ENCODE measurements at regions of chr22 and their contacts with region 1.

Region 1: DNA sequence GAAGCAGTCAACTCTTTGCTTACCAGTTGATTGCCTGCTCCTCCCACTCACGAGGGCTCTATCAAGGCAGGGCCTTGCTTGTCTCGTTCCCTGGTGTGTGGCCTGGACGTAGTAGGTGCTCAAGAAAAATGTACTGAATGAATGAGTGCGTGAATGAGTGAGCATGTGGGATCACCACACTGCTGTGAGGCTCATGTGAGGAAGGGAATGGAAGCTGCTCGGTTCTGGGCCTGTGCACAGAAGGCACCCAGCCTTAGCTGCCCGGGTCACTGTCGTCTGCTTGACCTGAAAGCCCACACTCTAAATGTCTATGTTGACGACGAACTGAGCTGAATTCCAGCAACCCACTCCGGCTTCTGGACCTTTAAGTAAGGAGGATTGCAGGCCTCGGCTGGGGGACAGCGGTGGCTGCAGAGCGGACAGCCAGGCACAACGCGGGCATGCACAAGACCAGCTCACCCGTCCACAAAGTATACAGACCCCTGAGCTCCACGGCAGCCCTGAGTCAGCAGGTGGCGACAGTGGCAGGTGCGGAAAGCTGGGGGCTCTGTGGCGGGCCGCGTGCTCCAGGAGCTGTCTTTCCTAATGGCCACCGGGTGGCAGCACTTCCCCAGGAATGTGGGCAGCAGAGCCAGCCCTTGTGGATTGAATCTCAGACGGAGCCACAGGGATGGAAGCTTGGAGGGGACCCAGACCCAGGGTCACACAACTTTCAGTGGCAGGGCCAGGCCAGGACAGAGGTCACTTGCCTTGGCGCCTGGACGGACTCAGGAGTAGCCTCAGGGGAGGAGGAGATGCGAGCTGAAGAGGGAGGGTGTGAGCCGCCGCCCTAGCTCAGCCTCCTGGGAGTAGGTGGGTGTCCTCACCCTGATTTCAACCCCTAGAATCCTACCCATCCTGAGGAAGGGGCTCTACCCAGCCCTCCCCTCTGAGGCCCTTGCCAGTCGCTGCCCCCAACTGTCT is 5.0 kb upstream of the PICK1 start:
- DNase-seq: peak; percentile 61 to 89 (median 81)
- ATAC-seq: peak; percentile 86
- H3K4me3 ChIP-seq: no peak overlapping the region
- H3K4me3 Mint-ChIP-seq: no peak overlapping the region
- H3K27ac ChIP-seq: no peak overlapping the region
- H3K27ac Mint-ChIP-seq: no peak overlapping the region
- H3K4me1 ChIP-seq: peaks cover 13% of the 10 kb centered on the region
- H3K4me1 Mint-ChIP-seq: peaks cover 9% of the 10 kb centered on the region
- H3K27me3 ChIP-seq: no peaks in the 10 kb centered on the region
- H3K27me3 Mint-ChIP-seq: peaks cover 6% of the 10 kb centered on the region
- CTCF ChIP-seq: peak; percentile 92

Region 2: GRCh38 chr22:37762389-37762836 is 289.8 kb before region 1 on chr22:
- CTCF ChIA-PET with region 1: no interaction called
- POLR2A ChIA-PET with region 1: no interaction called
- intact Hi-C with region 1: no loop called
- DNase-seq: no peak
- ATAC-seq: no peak
- H3K4me3 ChIP-seq: no peak overlapping the region
- H3K4me3 Mint-ChIP-seq: no peak overlapping the region
- H3K27ac ChIP-seq: no peak overlapping the region
- H3K27ac Mint-ChIP-seq: no peak overlapping the region
- H3K4me1 ChIP-seq: no peaks in the 10 kb centered on the region
- H3K4me1 Mint-ChIP-seq: no peaks in the 10 kb centered on the region
- H3K27me3 ChIP-seq: no peaks in the 10 kb centered on the region
- H3K27me3 Mint-ChIP-seq: no peaks in the 10 kb centered on the region
- CTCF ChIP-seq: no peak

Region 3: GRCh38 chr22:38066381-38067027 is 14.3 kb after region 1 on chr22:
- CTCF ChIA-PET with region 1: interaction called, 19 read pairs
- POLR2A ChIA-PET with region 1: no interaction called
- intact Hi-C with region 1: no loop called
- DNase-seq: no peak
- ATAC-seq: no peak
- H3K4me3 ChIP-seq: no peak overlapping the region
- H3K4me3 Mint-ChIP-seq: no peak overlapping the region
- H3K27ac ChIP-seq: no peak overlapping the region
- H3K27ac Mint-ChIP-seq: no peak overlapping the region
- H3K4me1 ChIP-seq: no peaks in the 10 kb centered on the region
- H3K4me1 Mint-ChIP-seq: peaks cover 2% of the 10 kb centered on the region
- H3K27me3 ChIP-seq: no peaks in the 10 kb centered on the region
- H3K27me3 Mint-ChIP-seq: no peaks in the 10 kb centered on the region
- CTCF ChIP-seq: no peak

Region 4: DNA sequence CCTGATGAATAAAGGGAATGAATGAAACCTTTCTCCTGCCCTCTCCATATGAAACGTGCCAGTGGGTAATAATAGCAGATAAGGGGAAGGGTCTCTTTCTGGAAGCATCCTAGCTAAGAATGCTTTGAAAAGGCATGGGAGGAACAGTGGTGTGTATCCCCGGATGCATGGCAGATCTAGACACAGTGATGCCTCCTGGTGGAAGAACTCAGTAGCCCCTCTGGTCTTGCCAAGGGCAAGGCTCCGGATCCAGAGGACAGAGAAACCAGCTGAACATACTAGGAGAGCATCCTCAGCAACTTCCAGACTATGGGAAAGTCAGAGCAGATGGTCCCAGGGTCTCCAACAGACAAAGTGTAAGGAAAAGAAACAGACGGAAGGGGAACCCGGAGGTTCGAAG is 51.9 kb after region 1 on chr22:
- CTCF ChIA-PET with region 1: interaction called, 13 read pairs
- POLR2A ChIA-PET with region 1: no interaction called
- intact Hi-C with region 1: loop called in 1 of 2 experiments (anchors 10 kb)
- DNase-seq: peak in 2 of 9 experiments; percentile 8 to 25
- ATAC-seq: no peak
- H3K4me3 ChIP-seq: no peak overlapping the region
- H3K4me3 Mint-ChIP-seq: no peak overlapping the region
- H3K27ac ChIP-seq: no peak overlapping the region
- H3K27ac Mint-ChIP-seq: no peak overlapping the region
- H3K4me1 ChIP-seq: no peaks in the 10 kb centered on the region
- H3K4me1 Mint-ChIP-seq: peaks cover 9% of the 10 kb centered on the region
- H3K27me3 ChIP-seq: no peaks in the 10 kb centered on the region
- H3K27me3 Mint-ChIP-seq: no peaks in the 10 kb centered on the region
- CTCF ChIP-seq: no peak

Region 5: GRCh38 chr22:38230108-38230825 is 178.1 kb after region 1 on chr22:
- CTCF ChIA-PET with region 1: interaction called, 20 read pairs
- POLR2A ChIA-PET with region 1: no interaction called
- intact Hi-C with region 1: loop called in 1 of 2 experiments (anchors 1 kb)
- DNase-seq: peak in 7 of 9 experiments; percentile 10 to 73 (median 47)
- ATAC-seq: peak; percentile 67
- H3K4me3 ChIP-seq: no peak overlapping the region
- H3K4me3 Mint-ChIP-seq: no peak overlapping the region
- H3K27ac ChIP-seq: peak overlapping the region in 1 of 2 experiments; percentile 31
- H3K27ac Mint-ChIP-seq: no peak overlapping the region
- H3K4me1 ChIP-seq: peaks cover 3% of the 10 kb centered on the region
- H3K4me1 Mint-ChIP-seq: no peaks in the 10 kb centered on the region
- H3K27me3 ChIP-seq: no peaks in the 10 kb centered on the region
- H3K27me3 Mint-ChIP-seq: no peaks in the 10 kb centered on the region
- CTCF ChIP-seq: peak; percentile 29

Region 6: GRCh38 chr22:38347897-38348750 is 295.9 kb after region 1 on chr22:
- CTCF ChIA-PET with region 1: interaction called, 44 read pairs
- POLR2A ChIA-PET with region 1: no interaction called
- intact Hi-C with region 1: loop called (anchors 1 kb)
- DNase-seq: peak in 1 of 9 experiments; percentile 25
- ATAC-seq: no peak
- H3K4me3 ChIP-seq: no peak overlapping the region
- H3K4me3 Mint-ChIP-seq: no peak overlapping the region
- H3K27ac ChIP-seq: no peak overlapping the region
- H3K27ac Mint-ChIP-seq: no peak overlapping the region
- H3K4me1 ChIP-seq: peaks cover 2% of the 10 kb centered on the region
- H3K4me1 Mint-ChIP-seq: no peaks in the 10 kb centered on the region
- H3K27me3 ChIP-seq: no peaks in the 10 kb centered on the region
- H3K27me3 Mint-ChIP-seq: peaks cover 5% of the 10 kb centered on the region
- CTCF ChIP-seq: no peak

Region 7: GRCh38 chr22:38681784-38682335 is 629.7 kb after region 1 on chr22 and contains the start of gene TOMM22:
- CTCF ChIA-PET with region 1: interaction called, 7 read pairs
- POLR2A ChIA-PET with region 1: no interaction called
- intact Hi-C with region 1: loop called in 1 of 2 experiments (anchors 10 kb)
- DNase-seq: peak; percentile 60 to 92 (median 84)
- ATAC-seq: peak; percentile 92
- H3K4me3 ChIP-seq: peak within 1 kb of the TSS; percentile 92 to 95
- H3K4me3 Mint-ChIP-seq: peak within 1 kb of the TSS; percentile 99
- H3K27ac ChIP-seq: peak within 1 kb of the TSS; percentile 84 to 87
- H3K27ac Mint-ChIP-seq: peak within 1 kb of the TSS; percentile 99
- H3K4me1 ChIP-seq: peaks cover 13% of the 10 kb centered on the region
- H3K4me1 Mint-ChIP-seq: peaks cover 19% of the 10 kb centered on the region
- H3K27me3 ChIP-seq: no peaks in the 10 kb centered on the region
- H3K27me3 Mint-ChIP-seq: no peaks in the 10 kb centered on the region
- CTCF ChIP-seq: peak; percentile 37
- total RNA-seq, gene TOMM22: 75.2 to 75.4 TPM

Region 8: DNA sequence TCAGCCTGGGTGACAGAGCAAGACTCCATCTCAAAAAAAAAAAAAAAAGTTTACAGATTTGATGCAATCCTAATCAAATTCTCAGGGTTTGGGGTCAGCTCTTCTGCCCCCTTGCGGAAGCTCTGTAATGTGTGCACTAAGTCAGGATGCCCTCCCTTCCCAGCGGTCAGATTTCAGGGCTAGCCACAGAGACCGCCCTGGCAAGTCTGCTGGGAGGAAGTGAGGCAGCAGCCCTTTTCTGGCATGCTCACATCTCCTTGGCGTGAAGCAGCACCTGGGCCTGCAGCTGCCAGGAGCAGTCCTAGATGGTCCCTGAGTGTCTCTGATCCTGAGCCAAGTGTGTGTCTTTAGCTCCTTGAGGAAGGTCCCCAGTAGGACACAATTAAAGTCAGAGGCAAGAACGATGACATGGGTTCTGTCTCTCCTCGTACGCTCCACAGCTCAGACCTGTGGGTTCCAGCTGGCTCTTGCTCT is 951.0 kb after region 1 on chr22:
- CTCF ChIA-PET with region 1: interaction called, 3 read pairs
- POLR2A ChIA-PET with region 1: no interaction called
- intact Hi-C with region 1: loop called in 1 of 2 experiments (anchors 10 kb)
- DNase-seq: peak; percentile 43 to 92 (median 76)
- ATAC-seq: peak; percentile 83
- H3K4me3 ChIP-seq: no peak overlapping the region
- H3K4me3 Mint-ChIP-seq: no peak overlapping the region
- H3K27ac ChIP-seq: no peak overlapping the region
- H3K27ac Mint-ChIP-seq: peak overlapping the region; percentile 27
- H3K4me1 ChIP-seq: peaks cover 10% of the 10 kb centered on the region
- H3K4me1 Mint-ChIP-seq: peaks cover 12% of the 10 kb centered on the region
- H3K27me3 ChIP-seq: no peaks in the 10 kb centered on the region
- H3K27me3 Mint-ChIP-seq: peaks cover under 1% of the 10 kb centered on the region
- CTCF ChIP-seq: peak; percentile 68

Measured in CD8-positive, alpha-beta T cell (primary cell).